K562 (cell line): ENCODE measurements at regions of chr6 and their contacts with region 1.

Region 1: DNA sequence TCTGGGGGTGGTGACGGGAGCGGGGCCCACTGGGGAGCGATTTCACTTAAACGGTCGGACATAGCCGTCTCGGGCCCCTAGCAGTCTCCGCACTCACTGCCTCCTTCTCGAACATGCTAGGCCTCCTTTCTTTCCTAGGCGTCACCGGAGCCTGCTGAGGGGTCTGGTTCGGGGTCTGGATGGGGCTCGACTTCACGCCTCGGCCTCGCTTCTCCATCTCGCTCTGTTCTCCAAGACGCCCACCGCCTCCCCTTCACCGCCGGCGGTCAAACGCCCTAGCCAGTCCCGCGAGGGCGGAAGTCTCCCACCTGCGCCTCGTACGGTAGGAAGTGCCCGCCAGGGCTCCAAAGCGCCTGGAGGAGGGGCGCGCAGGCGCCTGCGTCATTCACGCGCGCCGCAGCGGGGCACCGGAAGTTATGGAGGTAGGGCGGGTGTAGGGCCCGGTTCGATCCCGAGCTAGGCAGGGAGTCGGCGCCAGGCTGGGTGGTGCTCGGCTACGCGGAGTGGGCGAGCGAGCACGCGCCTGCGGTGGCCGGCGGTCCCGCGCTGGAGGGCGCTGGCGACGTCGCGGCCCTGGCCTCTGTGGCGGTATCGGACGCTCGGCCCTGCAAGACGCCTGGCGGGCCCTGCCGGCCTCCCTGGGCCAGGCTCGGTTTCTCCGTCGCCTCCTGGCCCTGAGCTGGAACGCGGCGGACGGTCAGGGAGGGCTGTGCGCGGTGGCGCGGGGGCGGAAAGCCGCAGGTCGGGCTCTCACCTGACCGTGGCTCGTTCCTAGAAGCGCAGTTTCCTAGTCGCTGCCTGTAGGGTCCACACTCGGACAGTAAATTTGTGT is at the starts of genes DYNLT2 and ERMARD:
- DNase-seq: peak; percentile 96 to 99 (median 97)
- ATAC-seq: peak; percentile 93
- H3K4me3 ChIP-seq: peak within 1 kb of the TSS; percentile 64
- H3K27ac ChIP-seq: peak within 1 kb of the TSS; percentile 89
- H3K4me1 ChIP-seq: peaks cover 9 to 16% of the 10 kb centered on the region in 2 experiments
- H3K27me3 ChIP-seq: no peaks in the 10 kb centered on the region
- CTCF ChIP-seq: peak in 2 of 3 experiments; percentile 12 to 44; a peak in 2 of 6 replicates
- EP300 ChIP-seq: peak; percentile 40; the same call in 1 of the 2 replicates
- POLR2A ChIP-seq: peak; percentile 98
- RAD21 ChIP-seq: 0 out of 4 replicates have a peak, but pooled peaks of 1 of the 2 experiments have one; percentile 3
- polyA plus RNA-seq, gene DYNLT2: 2.0 to 2.5 TPM
- polyA plus RNA-seq, gene ERMARD: 56.5 to 68.6 TPM

Region 2: GRCh38 chr6:169701954-169702839 is 49.3 kb before region 1 on chr6 and contains the starts of genes C6orf120 and WDR27:
- CTCF ChIA-PET with region 1: no interaction called
- POLR2A ChIA-PET with region 1: interaction called, 5 read pairs
- in situ Hi-C with region 1: no loop called
- intact Hi-C with region 1: loop called (anchors 1 kb)
- DNase-seq: peak; percentile 96 to 99 (median 98)
- ATAC-seq: peak; percentile 93
- H3K4me3 ChIP-seq: peak within 1 kb of the TSS; percentile 74
- H3K27ac ChIP-seq: peak within 1 kb of the TSS; percentile 90
- H3K4me1 ChIP-seq: peaks cover 13 to 19% of the 10 kb centered on the region in 2 experiments; a peak in 4 of 5 replicates
- H3K27me3 ChIP-seq: no peaks in the 10 kb centered on the region
- CTCF ChIP-seq: peak in 1 of 3 experiments; percentile 24; a peak in 2 of 6 replicates
- EP300 ChIP-seq: peak; percentile 33; the same call in 1 of the 2 replicates
- POLR2A ChIP-seq: peak; percentile 96
- RAD21 ChIP-seq: no peak
- polyA plus RNA-seq, gene C6orf120: 7.7 to 9.7 TPM
- polyA plus RNA-seq, gene WDR27: 4.3 to 5.1 TPM

Region 3: DNA sequence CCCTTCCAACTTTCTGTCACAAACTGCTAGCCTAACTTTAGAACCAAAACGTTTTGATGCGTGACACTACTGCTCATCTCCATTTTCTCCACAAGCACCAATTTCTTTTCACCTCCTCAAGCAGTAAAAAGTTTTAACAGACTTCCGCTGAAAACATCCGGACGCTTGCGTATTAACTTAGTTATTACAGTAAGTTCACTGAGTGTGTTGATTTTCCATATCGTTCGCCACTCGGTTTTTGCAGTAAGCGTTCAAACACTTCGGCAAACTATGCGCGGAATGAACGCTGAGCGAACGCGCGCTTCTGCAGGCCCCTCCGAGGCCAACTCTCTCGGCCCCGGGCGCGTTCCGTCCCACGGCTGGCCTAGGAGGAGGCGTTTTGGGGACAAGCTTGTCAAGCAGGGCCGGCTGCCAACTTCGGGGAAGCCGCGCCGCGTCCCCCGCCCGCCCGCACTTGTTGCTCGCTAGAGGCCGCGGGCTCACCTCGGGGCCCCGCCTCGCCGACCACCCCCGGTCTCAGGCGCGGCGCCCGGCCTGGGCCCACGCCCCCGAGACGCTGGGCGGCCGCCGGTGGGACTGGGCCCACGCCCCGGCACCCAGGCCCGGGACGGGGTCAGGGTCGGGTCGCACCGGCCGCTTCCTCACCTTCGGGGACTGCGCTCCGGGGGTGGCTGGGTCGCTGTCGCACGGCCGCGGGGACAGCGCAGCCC is 28.1 kb before region 1 on chr6:
- CTCF ChIA-PET with region 1: interaction called, 4 read pairs
- POLR2A ChIA-PET with region 1: interaction called, 13 read pairs
- in situ Hi-C with region 1: no loop called
- intact Hi-C with region 1: loop called (anchors 1 kb)
- DNase-seq: peak; percentile 79 to 86 (median 84)
- ATAC-seq: peak; percentile 70
- H3K4me3 ChIP-seq: peak overlapping the region; percentile 63
- H3K27ac ChIP-seq: peak overlapping the region; percentile 72
- H3K4me1 ChIP-seq: peaks cover 25 to 31% of the 10 kb centered on the region in 2 experiments
- H3K27me3 ChIP-seq: no peaks in the 10 kb centered on the region
- CTCF ChIP-seq: no peak
- EP300 ChIP-seq: 0 out of 2 replicates have a peak, but pooled peaks have one; percentile 3
- POLR2A ChIP-seq: no peak
- RAD21 ChIP-seq: no peak

Region 4: DNA sequence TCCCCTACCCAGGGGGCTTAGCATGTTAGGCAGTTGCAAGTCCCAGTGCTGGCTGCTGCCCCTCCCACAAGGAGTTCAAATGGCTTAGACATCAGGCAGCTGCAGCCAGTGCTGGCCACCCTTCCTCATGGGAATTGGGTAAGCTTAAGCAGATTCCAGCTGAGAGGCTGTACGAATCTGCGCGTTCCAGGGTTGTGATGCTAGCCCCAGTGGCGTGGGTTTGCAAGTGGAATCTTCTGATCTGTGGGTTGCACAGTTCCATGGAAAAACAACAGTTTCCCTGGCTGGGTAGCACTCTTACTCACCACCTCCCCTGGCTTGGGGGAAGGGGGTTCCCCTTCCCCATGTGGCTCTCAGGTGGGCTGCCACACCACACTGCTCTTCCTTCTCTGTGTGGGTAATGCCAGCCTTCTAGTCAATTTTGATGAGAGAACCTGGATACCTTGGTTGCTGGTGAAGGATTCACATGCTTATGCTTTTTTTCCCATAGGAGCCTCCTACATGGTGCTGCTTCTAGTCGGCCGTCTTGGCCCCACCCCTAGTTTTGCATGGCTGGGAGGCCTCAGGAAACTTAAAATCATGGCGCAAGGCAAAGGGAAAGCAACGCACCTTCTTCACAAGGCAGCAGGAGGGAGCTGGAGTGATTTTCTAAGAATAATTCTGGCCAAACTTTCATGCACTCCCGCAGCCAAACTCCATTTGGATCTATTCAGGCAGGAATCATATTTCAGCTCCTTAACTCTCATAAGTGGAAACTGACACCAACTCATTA is 13.1 kb before region 1 on chr6:
- CTCF ChIA-PET with region 1: no interaction called
- POLR2A ChIA-PET with region 1: interaction called, 27 read pairs
- in situ Hi-C with region 1: no loop called
- intact Hi-C with region 1: no loop called
- DNase-seq: no peak
- ATAC-seq: peak; percentile 71
- H3K4me3 ChIP-seq: no peak overlapping the region
- H3K27ac ChIP-seq: no peak overlapping the region
- H3K4me1 ChIP-seq: no peaks in the 10 kb centered on the region
- H3K27me3 ChIP-seq: no peaks in the 10 kb centered on the region
- CTCF ChIP-seq: no peak
- EP300 ChIP-seq: no peak
- POLR2A ChIP-seq: no peak
- RAD21 ChIP-seq: no peak

Region 5: DNA sequence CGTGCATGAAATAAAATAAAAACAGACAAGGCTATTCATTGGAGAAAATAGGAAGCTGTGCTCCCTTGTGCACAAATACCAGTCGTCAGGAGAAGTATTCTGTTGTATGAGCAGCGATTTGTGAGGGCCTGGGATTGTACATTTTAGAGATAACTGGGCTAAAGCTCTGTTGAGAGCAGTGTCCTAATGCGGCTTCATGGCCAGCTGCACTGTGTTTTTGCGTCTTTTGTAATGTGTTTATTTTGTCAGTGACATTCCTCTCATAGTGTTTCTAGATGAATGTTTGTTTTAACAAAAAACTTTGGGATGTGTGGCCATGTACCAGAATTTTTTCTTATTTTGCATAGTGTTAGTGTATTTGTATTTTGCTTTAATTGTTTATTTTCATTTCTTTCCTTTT is 14.8 kb after region 1 on chr6:
- CTCF ChIA-PET with region 1: no interaction called
- POLR2A ChIA-PET with region 1: interaction called, 11 read pairs
- in situ Hi-C with region 1: no loop called
- intact Hi-C with region 1: no loop called
- DNase-seq: no peak
- ATAC-seq: no peak
- H3K4me3 ChIP-seq: no peak overlapping the region
- H3K27ac ChIP-seq: no peak overlapping the region
- H3K4me1 ChIP-seq: no peaks in the 10 kb centered on the region
- H3K27me3 ChIP-seq: no peaks in the 10 kb centered on the region
- CTCF ChIP-seq: no peak
- EP300 ChIP-seq: no peak
- POLR2A ChIP-seq: no peak
- RAD21 ChIP-seq: no peak

Region 6: DNA sequence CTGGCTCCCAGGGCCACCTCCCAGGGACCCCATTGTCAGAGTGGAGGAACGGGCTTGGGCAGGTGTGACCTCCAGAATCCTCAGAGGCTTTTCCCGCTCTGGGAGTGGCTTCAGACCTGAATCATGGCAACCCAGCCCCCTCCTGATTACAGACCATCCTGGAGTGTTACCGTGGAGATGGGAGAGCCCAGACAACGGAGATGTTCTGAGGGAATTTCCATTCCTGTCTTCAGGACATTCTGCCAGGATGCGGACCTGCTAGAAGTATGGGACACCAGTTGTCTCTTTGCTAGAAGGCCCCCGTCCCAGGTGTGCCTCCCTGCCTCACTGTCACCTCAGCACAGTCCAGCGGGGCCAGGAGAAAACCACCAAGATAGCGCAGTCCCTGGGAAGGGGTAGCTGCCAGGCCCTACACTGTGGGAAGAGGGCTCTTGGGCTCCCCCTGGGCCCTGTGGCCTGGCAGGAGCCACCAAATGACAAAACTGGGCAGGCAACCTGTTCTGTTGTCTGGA is 691.7 kb after region 1 on chr6:
- CTCF ChIA-PET with region 1: no interaction called
- POLR2A ChIA-PET with region 1: no interaction called
- in situ Hi-C with region 1: no loop called
- intact Hi-C with region 1: no loop called
- DNase-seq: no peak
- ATAC-seq: peak; percentile 56
- H3K4me3 ChIP-seq: no peak overlapping the region
- H3K27ac ChIP-seq: no peak overlapping the region
- H3K4me1 ChIP-seq: peaks cover 0 to 12% of the 10 kb centered on the region in 2 experiments; a peak in 2 of 5 replicates
- H3K27me3 ChIP-seq: peaks cover 49 to 83% of the 10 kb centered on the region in 2 experiments
- CTCF ChIP-seq: peak in 2 of 3 experiments; percentile 19 to 35; a peak in 3 of 6 replicates
- EP300 ChIP-seq: no peak
- POLR2A ChIP-seq: no peak
- RAD21 ChIP-seq: peak in 1 of 2 experiments; percentile 20; a peak in 1 of 4 replicates

Region 7: GRCh38 chr6:170554013-170554795 is 802.7 kb after region 1 on chr6 and contains the start of gene TBP:
- CTCF ChIA-PET with region 1: no interaction called
- POLR2A ChIA-PET with region 1: no interaction called
- in situ Hi-C with region 1: no loop called
- intact Hi-C with region 1: loop called (anchors 1 kb)
- DNase-seq: peak; percentile 92 to 100 (median 95)
- ATAC-seq: peak; percentile 93
- H3K4me3 ChIP-seq: peak within 1 kb of the TSS; percentile 69
- H3K27ac ChIP-seq: peak within 1 kb of the TSS; percentile 90
- H3K4me1 ChIP-seq: peaks cover 3 to 24% of the 10 kb centered on the region in 2 experiments; a peak in 4 of 5 replicates
- H3K27me3 ChIP-seq: no peaks in the 10 kb centered on the region
- CTCF ChIP-seq: peak in 1 of 3 experiments; percentile 5; a peak in 1 of 6 replicates
- EP300 ChIP-seq: peak; percentile 63; the same call in 1 of the 2 replicates
- POLR2A ChIP-seq: peak; percentile 91
- RAD21 ChIP-seq: 0 out of 4 replicates have a peak, but pooled peaks of 1 of the 2 experiments have one; percentile 4
- polyA plus RNA-seq, gene TBP: 61.3 to 86.1 TPM